HEK293 (cell line): ENCODE measurements at regions of chr9 and their contacts with region 1.

Region 1: GRCh38 chr9:126704873-126705766 is 91.4 kb downstream of the LMX1B start:
- H3K4me3 ChIP-seq: peak overlapping the region; percentile 11; the same call in 1 of the 2 replicates
- H3K27ac ChIP-seq: no peak overlapping the region
- H3K4me1 ChIP-seq: no peaks in the 10 kb centered on the region
- CTCF ChIP-seq: peak; percentile 83

Region 2: GRCh38 chr9:126558051-126558665 is 147.0 kb before region 1 on chr9:
- CTCF ChIA-PET with region 1: interaction called, 10 read pairs
- POLR2A ChIA-PET with region 1: no interaction called
- H3K4me3 ChIP-seq: no peak overlapping the region
- H3K27ac ChIP-seq: no peak overlapping the region
- H3K4me1 ChIP-seq: no peaks in the 10 kb centered on the region
- CTCF ChIP-seq: peak; percentile 48

Region 3: GRCh38 chr9:126676685-126677143 is 28.4 kb before region 1 on chr9:
- CTCF ChIA-PET with region 1: interaction called, 21 read pairs
- POLR2A ChIA-PET with region 1: interaction called, 3 read pairs
- H3K4me3 ChIP-seq: no peak overlapping the region
- H3K27ac ChIP-seq: no peak overlapping the region
- H3K4me1 ChIP-seq: no peaks in the 10 kb centered on the region
- CTCF ChIP-seq: no peak

Region 4: DNA sequence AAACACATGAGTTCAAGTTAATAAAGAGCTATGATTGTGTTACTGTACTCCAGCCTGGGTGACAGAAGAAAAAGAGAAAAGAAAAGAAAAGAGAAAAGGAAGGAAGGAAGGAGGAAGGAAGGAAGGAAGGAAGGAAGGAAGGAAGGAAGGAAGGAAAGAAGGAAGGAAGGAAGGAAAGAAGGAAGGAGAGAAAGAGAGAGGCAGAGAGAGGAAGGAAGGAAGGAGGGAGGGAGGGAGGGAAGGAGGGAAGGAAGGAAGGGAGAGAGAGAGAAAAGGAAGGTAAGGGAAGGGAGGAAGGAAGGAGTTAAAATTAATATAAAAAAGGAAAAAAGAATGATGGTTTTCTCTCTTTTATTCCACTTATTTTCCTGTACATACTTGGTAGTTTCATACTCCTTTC is 10.3 kb after region 1 on chr9:
- CTCF ChIA-PET with region 1: interaction called, 50 read pairs
- POLR2A ChIA-PET with region 1: interaction called, 6 read pairs
- H3K4me3 ChIP-seq: no peak overlapping the region
- H3K27ac ChIP-seq: no peak overlapping the region
- H3K4me1 ChIP-seq: peaks cover 9% of the 10 kb centered on the region
- CTCF ChIP-seq: no peak

Region 5: GRCh38 chr9:126738553-126738952 is 33.4 kb after region 1 on chr9:
- CTCF ChIA-PET with region 1: interaction called, 14 read pairs
- POLR2A ChIA-PET with region 1: no interaction called
- H3K4me3 ChIP-seq: no peak overlapping the region
- H3K27ac ChIP-seq: no peak overlapping the region
- H3K4me1 ChIP-seq: no peaks in the 10 kb centered on the region
- CTCF ChIP-seq: no peak

Region 6: DNA sequence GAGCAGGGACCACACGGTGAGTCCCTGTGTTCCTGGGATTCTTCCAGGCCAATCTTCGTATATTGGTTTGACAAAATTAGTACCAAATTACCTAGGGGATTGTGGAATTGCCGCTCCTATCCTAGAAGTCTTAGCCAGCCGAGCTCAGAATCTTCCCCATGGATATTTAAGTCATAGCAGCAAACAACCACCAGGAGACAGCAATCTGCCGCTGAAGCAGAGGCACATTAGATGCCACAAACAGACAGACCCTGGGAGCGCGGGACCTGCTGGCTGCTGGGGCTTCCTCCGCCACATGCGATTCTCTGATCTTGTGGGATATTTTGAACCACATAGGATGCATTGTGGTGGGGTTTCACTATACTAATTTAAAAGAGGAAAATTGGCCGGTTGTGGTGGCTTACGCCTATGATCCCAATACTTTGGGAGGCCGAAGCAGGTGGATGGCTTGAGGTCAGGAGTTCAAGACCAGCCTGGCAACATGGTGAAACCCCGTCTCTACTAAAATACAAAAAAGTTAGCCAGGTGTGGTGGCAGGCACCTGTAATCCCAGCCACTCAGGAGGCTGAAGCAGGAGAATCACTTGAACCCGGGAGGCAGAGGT is 68.0 kb after region 1 on chr9:
- CTCF ChIA-PET with region 1: interaction called, 373 read pairs
- POLR2A ChIA-PET with region 1: interaction called, 3 read pairs
- H3K4me3 ChIP-seq: no peak overlapping the region
- H3K27ac ChIP-seq: no peak overlapping the region
- H3K4me1 ChIP-seq: no peaks in the 10 kb centered on the region
- CTCF ChIP-seq: no peak

Region 7: GRCh38 chr9:126791406-126792151 is 86.5 kb after region 1 on chr9:
- CTCF ChIA-PET with region 1: interaction called, 29 read pairs
- POLR2A ChIA-PET with region 1: no interaction called
- H3K4me3 ChIP-seq: no peak overlapping the region
- H3K27ac ChIP-seq: no peak overlapping the region
- H3K4me1 ChIP-seq: no peaks in the 10 kb centered on the region; the same call in 1 of the 2 replicates
- CTCF ChIP-seq: no peak